PC-9 (cell line): ENCODE measurements at regions of chr2 and their contacts with region 1.

Region 1: GRCh38 chr2:229610333-229610732 is 104.0 kb downstream of the DNER start:
- DNase-seq: no peak
- H3K4me3 ChIP-seq: no peak overlapping the region
- H3K27ac ChIP-seq: no peak overlapping the region; the same call in 1 of the 2 replicates
- H3K4me1 ChIP-seq: peaks cover 13% of the 10 kb centered on the region; the same call in 1 of the 2 replicates
- H3K27me3 ChIP-seq: no peaks in the 10 kb centered on the region
- CTCF ChIP-seq: no peak

Region 2: DNA sequence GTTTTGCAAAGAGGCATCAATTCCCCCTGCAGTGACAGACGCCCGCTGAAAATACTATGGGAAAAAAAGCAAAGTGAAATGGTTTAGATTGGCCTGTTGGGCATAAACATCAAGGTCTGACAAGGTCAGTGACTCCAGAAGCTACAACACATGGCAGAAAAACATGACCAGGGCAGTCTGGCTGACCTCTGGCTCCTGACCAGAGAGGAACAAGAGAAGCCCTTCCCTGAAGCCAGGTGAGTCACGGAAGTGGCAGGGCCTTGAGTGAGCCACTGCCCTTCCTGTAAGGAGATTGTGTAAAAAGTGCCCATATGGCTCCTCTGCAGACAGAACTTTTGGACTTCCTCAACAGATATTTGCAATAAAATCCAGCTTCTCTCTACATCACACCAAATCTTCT is 32.0 kb after region 1 on chr2:
- CTCF ChIA-PET with region 1: no interaction called
- POLR2A ChIA-PET with region 1: no interaction called
- intact Hi-C with region 1: loop called (anchors 1 kb)
- DNase-seq: peak; percentile 58 to 81
- H3K4me3 ChIP-seq: no peak overlapping the region
- H3K27ac ChIP-seq: peak overlapping the region; percentile 47
- H3K4me1 ChIP-seq: peaks cover 16% of the 10 kb centered on the region
- H3K27me3 ChIP-seq: no peaks in the 10 kb centered on the region
- CTCF ChIP-seq: no peak